ENCODE measurements at regions of chr9 and their contacts with region 1.

Region 1: GRCh38 chr9:133945314-133945975 is 46.7 kb downstream of the VAV2 start:
- DNase-seq: no peak
- ATAC-seq: no peak
- H3K4me3 ChIP-seq: no peak overlapping the region
- H3K27ac ChIP-seq: no peak overlapping the region
- H3K4me1 ChIP-seq: peaks cover 0 to 26% (median 5%) of the 10 kb centered on the region in 9 donors
- H3K27me3 ChIP-seq: no peaks in the 10 kb centered on the region
- CTCF ChIP-seq: no peak

Region 2: GRCh38 chr9:133979921-133980863 is 34.7 kb after region 1 on chr9:
- intact Hi-C with region 1: loop called in 1 of 10 experiments (anchors 5 kb)
- DNase-seq: no peak
- ATAC-seq: peak in 1 of 8 donors; percentile 8
- H3K4me3 ChIP-seq: peak overlapping the region in 8 of 10 donors; percentile 13 to 44 (median 34)
- H3K27ac ChIP-seq: peak overlapping the region in 7 of 10 donors; percentile 49 to 68 (median 65)
- H3K4me1 ChIP-seq: peaks cover 2 to 29% (median 18%) of the 10 kb centered on the region in 9 donors
- H3K27me3 ChIP-seq: no peaks in the 10 kb centered on the region
- CTCF ChIP-seq: no peak